PC-9 (cell line): ENCODE measurements at regions of chr13 and their contacts with region 1.

Region 1: GRCh38 chr13:77565635-77566034 is 30.1 kb downstream of the SCEL start:
- DNase-seq: peak in 1 of 2 experiments; percentile 50
- H3K4me3 ChIP-seq: no peak overlapping the region
- H3K27ac ChIP-seq: no peak overlapping the region
- H3K4me1 ChIP-seq: no peaks in the 10 kb centered on the region; the same call in 1 of the 2 replicates
- H3K27me3 ChIP-seq: no peaks in the 10 kb centered on the region
- CTCF ChIP-seq: peak; percentile 81

Region 2: GRCh38 chr13:77535448-77535847 is 30.2 kb before region 1 on chr13 and contains the start of gene SCEL:
- CTCF ChIA-PET with region 1: interaction called, 11 read pairs
- POLR2A ChIA-PET with region 1: no interaction called
- intact Hi-C with region 1: no loop called
- DNase-seq: peak; percentile 65 to 93
- H3K4me3 ChIP-seq: peak within 1 kb of the TSS; percentile 61
- H3K27ac ChIP-seq: peak within 1 kb of the TSS; percentile 92
- H3K4me1 ChIP-seq: peaks cover 61% of the 10 kb centered on the region
- H3K27me3 ChIP-seq: no peaks in the 10 kb centered on the region
- CTCF ChIP-seq: no peak
- total RNA-seq, gene SCEL: 19.5 and 32.5 TPM in 2 replicates